ENCODE measurements at regions of chr5 and their contacts with region 1.

Region 1: GRCh38 chr5:149618581-149619251 is 37.4 kb downstream of the ARHGEF37 start:
- DNase-seq: peak; percentile 75 to 77
- H3K4me3 ChIP-seq: no peak overlapping the region
- H3K27ac ChIP-seq: peak overlapping the region; percentile 54
- H3K4me1 ChIP-seq: peaks cover 33% of the 10 kb centered on the region
- H3K27me3 ChIP-seq: no peaks in the 10 kb centered on the region
- CTCF ChIP-seq: peak; percentile 87

Region 2: GRCh38 chr5:149367249-149367971 is 251.3 kb before region 1 on chr5:
- CTCF ChIA-PET with region 1: interaction called, 5 read pairs
- POLR2A ChIA-PET with region 1: no interaction called
- intact Hi-C with region 1: loop called (anchors 2 kb)
- DNase-seq: peak; percentile 64 to 76
- H3K4me3 ChIP-seq: no peak overlapping the region
- H3K27ac ChIP-seq: no peak overlapping the region
- H3K4me1 ChIP-seq: no peaks in the 10 kb centered on the region
- H3K27me3 ChIP-seq: no peaks in the 10 kb centered on the region
- CTCF ChIP-seq: peak; percentile 84

Region 3: DNA sequence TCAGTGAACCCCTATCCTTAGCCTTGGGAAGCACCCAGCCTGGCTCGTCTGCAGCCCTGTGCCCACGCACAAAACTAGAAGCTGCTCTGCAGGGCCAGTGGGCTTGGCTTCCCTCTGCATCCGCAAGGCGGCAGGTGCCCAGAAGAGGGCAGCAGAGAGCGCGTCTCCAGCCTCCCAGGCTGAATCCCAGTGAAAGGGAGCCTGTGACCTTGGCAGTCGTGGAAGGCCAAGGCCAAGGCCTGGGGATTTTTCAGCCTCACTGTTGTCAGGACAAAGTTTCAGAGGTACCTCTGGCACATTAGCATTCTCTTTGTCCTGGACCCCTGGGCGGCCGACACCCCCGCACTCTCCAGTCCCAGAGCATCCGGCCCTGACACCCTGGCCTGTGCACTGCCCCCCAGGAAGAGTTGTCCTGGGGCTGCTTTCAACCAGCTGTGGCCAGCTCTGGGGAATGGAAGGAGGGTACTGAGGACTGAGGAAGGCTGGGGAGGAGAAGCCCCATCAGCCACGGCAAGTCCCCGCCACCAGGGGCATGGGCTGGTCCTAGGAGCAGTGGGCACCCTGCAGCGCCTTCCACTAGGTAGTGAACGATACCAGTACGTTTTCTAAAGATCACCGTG is 176.0 kb before region 1 on chr5:
- CTCF ChIA-PET with region 1: interaction called, 3 read pairs
- POLR2A ChIA-PET with region 1: no interaction called
- intact Hi-C with region 1: loop called (anchors 1 kb)
- DNase-seq: peak; percentile 46 to 91
- H3K4me3 ChIP-seq: no peak overlapping the region
- H3K27ac ChIP-seq: no peak overlapping the region
- H3K4me1 ChIP-seq: peaks cover 42% of the 10 kb centered on the region
- H3K27me3 ChIP-seq: no peaks in the 10 kb centered on the region
- CTCF ChIP-seq: peak; percentile 89

Region 4: GRCh38 chr5:149503006-149503405 is 115.7 kb before region 1 on chr5:
- CTCF ChIA-PET with region 1: no interaction called
- POLR2A ChIA-PET with region 1: interaction called, 20 read pairs
- intact Hi-C with region 1: no loop called
- DNase-seq: no peak
- H3K4me3 ChIP-seq: no peak overlapping the region
- H3K27ac ChIP-seq: no peak overlapping the region
- H3K4me1 ChIP-seq: no peaks in the 10 kb centered on the region
- H3K27me3 ChIP-seq: no peaks in the 10 kb centered on the region
- CTCF ChIP-seq: no peak

Region 5: GRCh38 chr5:149561848-149562247 is 56.9 kb before region 1 on chr5:
- CTCF ChIA-PET with region 1: interaction called, 9 read pairs
- POLR2A ChIA-PET with region 1: interaction called, 3 read pairs
- intact Hi-C with region 1: loop called (anchors 1 kb)
- DNase-seq: peak; percentile 48 to 95
- H3K4me3 ChIP-seq: peak overlapping the region; percentile 43; the same call in 1 of the 2 replicates
- H3K27ac ChIP-seq: peak overlapping the region; percentile 97
- H3K4me1 ChIP-seq: peaks cover 53% of the 10 kb centered on the region
- H3K27me3 ChIP-seq: no peaks in the 10 kb centered on the region
- CTCF ChIP-seq: no peak

Region 6: GRCh38 chr5:149598781-149599774 is 19.6 kb before region 1 on chr5:
- CTCF ChIA-PET with region 1: no interaction called
- POLR2A ChIA-PET with region 1: no interaction called
- intact Hi-C with region 1: no loop called
- DNase-seq: no peak
- H3K4me3 ChIP-seq: no peak overlapping the region
- H3K27ac ChIP-seq: no peak overlapping the region
- H3K4me1 ChIP-seq: peaks cover 21% of the 10 kb centered on the region
- H3K27me3 ChIP-seq: no peaks in the 10 kb centered on the region
- CTCF ChIP-seq: no peak

Measured in PC-9 (cell line).